ENCODE measurements at regions of chr10 and their contacts with region 1.

Region 1: GRCh38 chr10:3785257-3785850 is 345 bp upstream of the KLF6 start:
- DNase-seq: peak; percentile 98
- ATAC-seq: peak; percentile 71
- H3K4me3 Mint-ChIP-seq: peak overlapping the region; percentile 91
- H3K27ac Mint-ChIP-seq: peak overlapping the region; percentile 98
- H3K4me1 Mint-ChIP-seq: peaks cover 33% of the 10 kb centered on the region
- H3K27me3 Mint-ChIP-seq: no peaks in the 10 kb centered on the region
- CTCF ChIP-seq: no peak

Region 2: GRCh38 chr10:3239066-3239919 is 546.1 kb before region 1 on chr10:
- CTCF ChIA-PET with region 1: interaction called, 5 read pairs
- POLR2A ChIA-PET with region 1: interaction called, 8 read pairs
- intact Hi-C with region 1: loop called (anchors 2 kb)
- DNase-seq: peak; percentile 66
- ATAC-seq: peak; percentile 85
- H3K4me3 Mint-ChIP-seq: no peak overlapping the region
- H3K27ac Mint-ChIP-seq: no peak overlapping the region
- H3K4me1 Mint-ChIP-seq: peaks cover 5% of the 10 kb centered on the region
- H3K27me3 Mint-ChIP-seq: peaks cover 6% of the 10 kb centered on the region
- CTCF ChIP-seq: no peak

Region 3: DNA sequence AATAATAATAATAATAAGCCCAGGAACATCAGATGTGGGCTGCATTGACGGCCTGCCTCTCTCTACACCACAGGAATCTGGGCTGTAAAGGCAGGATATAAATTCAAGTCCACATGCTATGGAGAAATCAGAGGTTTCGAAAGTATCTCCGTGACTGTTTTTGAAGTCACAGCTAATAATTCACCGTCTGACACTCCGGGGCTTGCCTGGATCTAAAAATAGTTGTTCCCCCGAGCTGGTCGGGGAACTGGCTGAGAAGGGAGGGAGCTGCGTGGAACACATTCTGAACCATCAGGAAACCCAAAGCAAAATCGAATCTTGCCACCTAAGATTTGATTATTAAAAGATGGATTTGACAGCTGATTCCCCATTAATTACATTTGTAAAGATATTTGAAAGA is 35.8 kb before region 1 on chr10:
- CTCF ChIA-PET with region 1: no interaction called
- POLR2A ChIA-PET with region 1: interaction called, 22 read pairs
- intact Hi-C with region 1: no loop called
- DNase-seq: no peak
- ATAC-seq: peak; percentile 28
- H3K4me3 Mint-ChIP-seq: peak overlapping the region; percentile 69
- H3K27ac Mint-ChIP-seq: peak overlapping the region; percentile 26
- H3K4me1 Mint-ChIP-seq: peaks cover 22% of the 10 kb centered on the region
- H3K27me3 Mint-ChIP-seq: no peaks in the 10 kb centered on the region
- CTCF ChIP-seq: no peak

Region 4: DNA sequence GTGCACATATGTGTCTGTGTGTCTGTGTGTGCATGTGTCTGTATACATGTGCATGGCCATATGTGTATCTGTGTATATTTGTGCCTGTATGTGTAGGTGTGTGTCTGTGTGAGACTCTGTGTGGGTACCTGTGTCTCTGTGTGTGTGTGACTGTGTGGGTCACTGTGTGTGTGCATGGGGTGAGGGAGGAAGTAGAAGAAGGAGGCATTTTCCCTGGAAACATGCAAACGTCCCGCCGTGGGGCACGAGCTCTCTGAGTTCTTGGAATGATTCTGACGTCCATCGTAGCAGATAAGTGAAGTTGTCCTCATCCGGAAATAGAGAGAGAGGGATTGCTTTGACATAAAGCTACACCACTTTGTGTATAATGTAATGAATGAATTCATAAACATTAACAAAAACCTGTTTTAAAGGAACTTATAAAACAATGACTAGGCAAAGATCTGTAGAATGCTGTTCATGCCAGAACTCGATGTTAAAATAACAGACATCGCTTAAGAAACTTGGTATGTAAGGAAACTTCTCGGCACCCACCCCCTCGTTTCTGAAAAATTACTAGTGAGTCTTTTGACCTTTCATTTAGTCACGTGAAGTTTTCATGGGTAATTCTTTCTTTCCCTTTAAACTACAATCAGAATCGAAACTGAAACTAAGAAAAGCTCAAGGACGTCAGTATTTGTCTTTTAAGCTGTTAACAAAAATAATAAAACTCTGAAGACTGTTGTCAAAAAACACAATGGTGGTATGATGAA is 43.2 kb after region 1 on chr10:
- CTCF ChIA-PET with region 1: interaction called, 4 read pairs
- POLR2A ChIA-PET with region 1: interaction called, 68 read pairs
- intact Hi-C with region 1: loop called (anchors 2 kb)
- DNase-seq: no peak
- ATAC-seq: peak; percentile 65
- H3K4me3 Mint-ChIP-seq: peak overlapping the region; percentile 75
- H3K27ac Mint-ChIP-seq: peak overlapping the region; percentile 82
- H3K4me1 Mint-ChIP-seq: peaks cover 23% of the 10 kb centered on the region
- H3K27me3 Mint-ChIP-seq: no peaks in the 10 kb centered on the region
- CTCF ChIP-seq: no peak

Region 5: DNA sequence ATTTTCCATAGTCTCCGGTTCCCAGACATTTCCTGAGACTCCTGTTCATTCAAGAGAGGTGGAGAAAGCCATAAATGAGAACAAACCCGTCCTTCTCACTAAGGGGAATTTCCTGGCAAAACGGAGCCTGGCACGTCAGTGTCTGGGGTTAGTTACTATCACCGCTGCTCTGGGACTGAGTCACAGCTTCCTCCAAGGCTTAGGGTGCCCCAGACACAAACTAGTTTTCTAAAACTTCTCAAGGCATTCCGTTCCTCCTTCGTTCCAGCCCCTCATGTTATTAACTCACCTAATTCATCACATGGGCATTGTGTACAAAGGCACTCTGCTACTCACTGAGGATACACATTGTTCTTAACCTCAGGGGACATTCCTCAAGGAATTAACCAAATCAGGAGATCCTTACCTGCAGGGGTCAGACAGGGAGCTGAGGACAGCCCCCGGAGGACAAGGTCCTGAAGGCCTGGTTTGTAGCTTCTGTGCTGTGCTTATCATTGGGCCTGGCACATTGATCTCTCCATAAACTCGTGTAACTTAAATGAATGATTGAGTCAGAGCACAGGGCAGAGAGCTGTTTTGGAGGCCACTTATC is 102.6 kb after region 1 on chr10:
- CTCF ChIA-PET with region 1: no interaction called
- POLR2A ChIA-PET with region 1: interaction called, 45 read pairs
- intact Hi-C with region 1: no loop called
- DNase-seq: no peak
- ATAC-seq: peak; percentile 83
- H3K4me3 Mint-ChIP-seq: peak overlapping the region; percentile 13
- H3K27ac Mint-ChIP-seq: peak overlapping the region; percentile 78
- H3K4me1 Mint-ChIP-seq: peaks cover 26% of the 10 kb centered on the region
- H3K27me3 Mint-ChIP-seq: peaks cover 3% of the 10 kb centered on the region
- CTCF ChIP-seq: no peak

Region 6: DNA sequence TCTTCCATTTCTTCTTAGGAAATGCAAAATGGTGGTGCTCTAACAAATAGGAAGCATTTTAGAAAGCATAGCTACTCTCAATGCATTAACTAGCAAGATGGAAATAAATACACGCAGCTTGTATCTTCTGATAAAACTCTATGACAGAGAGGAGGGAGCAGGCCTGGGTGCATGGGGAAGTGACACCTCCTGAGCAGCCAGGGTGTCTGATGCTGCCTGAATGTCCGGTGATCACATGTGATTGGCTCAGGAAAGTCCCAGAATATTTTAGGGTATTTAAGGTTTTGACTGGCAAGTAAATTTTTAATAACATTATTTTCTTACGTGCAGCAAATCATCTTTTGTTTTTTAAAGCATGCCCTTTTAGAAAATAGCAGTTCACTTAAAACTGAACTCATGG is 260.7 kb after region 1 on chr10:
- CTCF ChIA-PET with region 1: no interaction called
- POLR2A ChIA-PET with region 1: interaction called, 18 read pairs
- intact Hi-C with region 1: no loop called
- DNase-seq: no peak
- ATAC-seq: peak; percentile 87
- H3K4me3 Mint-ChIP-seq: peak overlapping the region; percentile 50
- H3K27ac Mint-ChIP-seq: peak overlapping the region; percentile 25
- H3K4me1 Mint-ChIP-seq: peaks cover 24% of the 10 kb centered on the region
- H3K27me3 Mint-ChIP-seq: no peaks in the 10 kb centered on the region
- CTCF ChIP-seq: no peak

Region 7: DNA sequence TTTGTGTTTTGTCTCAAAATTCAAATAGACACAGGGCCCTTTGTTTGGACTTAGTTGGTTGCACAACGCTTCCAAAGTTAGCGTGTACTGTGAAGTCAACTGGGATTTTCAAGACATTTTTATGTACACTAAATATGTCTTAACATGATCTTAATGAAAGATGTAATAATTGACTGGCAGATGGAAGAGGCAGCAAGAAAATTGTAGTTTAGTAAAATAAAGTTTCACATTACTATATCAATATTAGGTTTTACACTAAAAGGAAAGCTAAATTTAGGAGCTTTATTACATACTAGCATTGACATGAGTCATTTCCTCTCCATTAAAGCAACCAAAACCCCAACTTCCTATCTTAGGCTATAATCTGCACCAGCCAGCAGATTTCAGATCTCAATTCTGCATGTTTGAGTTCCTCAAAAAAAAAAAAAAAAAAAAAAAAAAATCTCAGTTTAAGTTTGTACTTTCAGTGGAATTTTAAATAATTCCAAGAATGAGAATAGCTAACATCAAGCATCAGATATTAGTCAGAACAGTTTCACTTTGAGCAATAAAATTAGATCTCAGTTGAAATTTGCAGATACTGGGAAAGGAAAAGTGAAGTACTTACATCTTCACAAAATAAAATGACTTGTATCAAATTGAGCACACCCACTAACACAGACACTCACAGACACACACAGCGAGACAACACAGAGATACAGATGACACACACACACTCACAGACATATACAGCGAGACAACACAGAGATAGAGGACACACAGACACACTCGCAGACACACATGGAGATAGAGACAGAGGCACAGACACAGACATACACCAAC is 346.3 kb after region 1 on chr10:
- CTCF ChIA-PET with region 1: no interaction called
- POLR2A ChIA-PET with region 1: interaction called, 137 read pairs
- intact Hi-C with region 1: loop called (anchors 2 kb)
- DNase-seq: no peak
- ATAC-seq: peak; percentile 75
- H3K4me3 Mint-ChIP-seq: no peak overlapping the region
- H3K27ac Mint-ChIP-seq: no peak overlapping the region
- H3K4me1 Mint-ChIP-seq: peaks cover 35% of the 10 kb centered on the region
- H3K27me3 Mint-ChIP-seq: no peaks in the 10 kb centered on the region
- CTCF ChIP-seq: no peak